Aorta (tissue), 5 donors: ENCODE measurements at regions of chr2 and their contacts with region 1.

Region 1: GRCh38 chr2:178804791-178805190 is 2.4 kb downstream of the TTN start:
- DNase-seq: no peak
- ATAC-seq: no peak
- H3K4me3 ChIP-seq: no peak overlapping the region
- H3K27ac ChIP-seq: peak overlapping the region in 1 of 2 donors; percentile 69
- H3K4me1 ChIP-seq: peaks cover 0 to 1% of the 10 kb centered on the region in 2 donors
- H3K27me3 ChIP-seq: no peaks in the 10 kb centered on the region

Region 2: GRCh38 chr2:178718283-178718682 is 86.5 kb before region 1 on chr2:
- intact Hi-C with region 1: no loop called
- DNase-seq: no peak
- ATAC-seq: no peak
- H3K4me3 ChIP-seq: no peak overlapping the region
- H3K27ac ChIP-seq: no peak overlapping the region
- H3K4me1 ChIP-seq: no peaks in the 10 kb centered on the region
- H3K27me3 ChIP-seq: no peaks in the 10 kb centered on the region

Region 3: GRCh38 chr2:178845566-178846457 is 41.0 kb after region 1 on chr2:
- intact Hi-C with region 1: loop called in 1 of 2 experiments (anchors 5 kb)
- DNase-seq: no peak
- ATAC-seq: peak; percentile 48
- H3K4me3 ChIP-seq: no peak overlapping the region
- H3K27ac ChIP-seq: peak overlapping the region in 1 of 2 donors; percentile 87
- H3K4me1 ChIP-seq: peaks cover 0 to 4% of the 10 kb centered on the region in 2 donors
- H3K27me3 ChIP-seq: no peaks in the 10 kb centered on the region

Region 4: DNA sequence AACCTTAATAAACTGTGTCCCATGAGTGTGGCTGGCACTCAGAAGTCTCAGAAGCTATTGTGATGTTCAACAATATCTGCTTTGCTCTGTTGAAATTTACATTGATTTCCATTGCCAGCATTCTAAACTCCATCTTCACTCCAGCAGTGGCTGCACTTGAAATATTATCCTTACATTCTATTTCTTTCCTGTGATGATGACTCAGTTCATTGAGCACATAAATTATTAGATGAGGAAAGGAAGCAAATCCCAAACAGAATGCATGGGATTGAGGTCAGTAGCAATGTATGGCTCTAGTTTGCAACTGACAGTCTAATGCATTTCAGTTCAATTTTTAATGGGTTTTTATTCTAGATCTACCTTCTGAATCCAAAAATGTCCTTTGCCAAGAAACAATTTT is 94.9 kb after region 1 on chr2:
- intact Hi-C with region 1: loop called in 1 of 2 experiments (anchors 5 kb)
- DNase-seq: no peak
- ATAC-seq: no peak
- H3K4me3 ChIP-seq: no peak overlapping the region
- H3K27ac ChIP-seq: no peak overlapping the region
- H3K4me1 ChIP-seq: peaks cover 2 to 3% of the 10 kb centered on the region in 2 donors
- H3K27me3 ChIP-seq: no peaks in the 10 kb centered on the region